Posterior cingulate gyrus (tissue), 11 donors: ENCODE measurements at regions of chr15 and their contacts with region 1.

Region 1: DNA sequence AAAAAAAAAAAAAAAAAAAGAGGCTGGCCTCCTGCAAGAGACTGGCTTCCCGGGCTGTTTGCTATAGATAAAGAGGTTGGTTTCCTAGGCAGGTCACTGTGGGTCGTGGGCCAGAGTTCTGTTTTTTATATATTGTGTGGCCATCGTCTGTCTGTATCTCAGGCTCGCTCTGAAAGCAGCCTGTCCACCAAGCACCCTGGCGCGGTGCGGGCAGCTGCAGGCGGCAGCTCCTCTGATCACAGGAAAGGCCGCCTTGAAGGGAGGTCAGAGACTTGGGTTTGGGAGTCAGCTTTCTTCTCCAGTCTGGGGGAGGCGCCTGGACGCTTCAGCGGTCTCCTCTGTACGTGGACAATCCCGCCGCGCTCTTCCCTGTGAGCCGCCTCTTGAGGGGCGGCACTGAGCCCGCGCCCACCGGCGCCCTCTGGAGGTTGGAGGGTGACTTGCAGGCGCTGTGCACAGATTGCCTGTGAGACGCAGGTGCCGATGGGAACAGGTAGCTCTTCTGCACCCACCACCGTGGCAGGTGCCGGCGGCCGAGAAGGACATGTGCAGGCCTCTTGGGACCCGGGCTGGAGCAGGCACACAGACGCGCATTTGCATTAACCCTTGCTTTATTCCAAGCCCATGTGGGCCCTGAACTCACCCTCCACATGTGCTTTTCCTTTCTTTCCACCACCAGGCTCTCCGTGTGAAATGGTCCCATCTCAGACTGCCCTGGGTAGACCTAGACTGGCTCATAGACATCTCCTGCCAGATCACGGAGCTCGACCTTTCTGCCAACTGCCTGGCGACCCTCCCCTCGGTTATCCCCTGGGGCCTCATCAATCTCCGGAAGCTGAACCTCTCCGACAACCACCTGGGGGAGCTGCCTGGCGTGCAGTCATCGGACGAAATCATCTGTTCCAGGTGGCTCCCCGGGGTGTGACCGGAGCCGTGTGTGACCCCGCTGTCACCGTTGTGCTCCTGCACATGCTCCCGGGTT is 89.3 kb downstream of the LRRK1 start:
- DNase-seq: peak; percentile 50 to 96 (median 70)

Region 2: GRCh38 chr15:100341662-100342560 is 666.5 kb before region 1 on chr15 and contains the start of gene ADAMTS17:
- intact Hi-C with region 1: loop called (anchors 5 kb)
- DNase-seq: peak; percentile 91 to 99 (median 95)

Region 3: GRCh38 chr15:100627789-100628395 is 380.6 kb before region 1 on chr15:
- intact Hi-C with region 1: loop called (anchors 1 kb)
- DNase-seq: peak in 8 of 10 donors; percentile 24 to 82 (median 70)

Region 4: GRCh38 chr15:100671858-100672543 is 336.4 kb before region 1 on chr15:
- intact Hi-C with region 1: loop called (anchors 2 kb)
- DNase-seq: peak in 1 of 10 donors; percentile 73

Region 5: DNA sequence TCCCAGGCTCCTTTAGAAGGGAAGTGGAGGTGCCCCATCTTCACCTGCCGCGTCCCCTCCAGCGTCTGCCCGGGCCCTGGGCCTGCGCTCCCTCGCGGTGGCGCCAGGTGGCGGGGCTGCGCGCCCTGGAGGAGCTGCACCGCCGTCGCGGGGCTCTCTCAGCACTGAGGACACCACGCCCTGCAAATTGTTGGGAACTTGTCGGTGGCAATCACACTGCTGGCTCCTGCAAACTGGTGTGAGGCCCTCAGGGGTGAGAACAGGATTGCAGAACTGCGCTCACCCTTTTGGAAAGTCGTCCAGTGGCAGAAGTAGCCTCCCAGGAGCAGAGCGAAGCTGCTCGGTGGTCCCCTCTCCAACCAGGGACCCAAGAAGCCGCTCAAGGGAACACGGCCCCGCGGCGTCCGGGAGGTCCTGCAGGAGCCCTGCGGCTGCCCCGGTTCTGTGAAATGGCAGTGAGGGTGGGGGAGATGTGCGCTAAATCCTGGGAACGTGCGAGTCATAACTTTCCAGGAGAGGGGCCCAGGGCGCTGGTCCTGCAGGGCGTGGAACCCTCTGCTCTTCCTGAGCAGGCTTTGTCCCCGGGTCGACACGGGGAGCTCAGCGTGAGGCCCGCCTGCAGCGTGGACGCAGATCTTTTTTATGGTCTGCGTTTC is 90.3 kb before region 1 on chr15:
- intact Hi-C with region 1: loop called (anchors 1 kb)
- DNase-seq: peak; percentile 43 to 96 (median 60)

Region 6: GRCh38 chr15:101045236-101045646 is 36.8 kb after region 1 on chr15:
- intact Hi-C with region 1: no loop called
- DNase-seq: peak in 3 of 10 donors; percentile 8 to 29 (median 28)

Region 7: DNA sequence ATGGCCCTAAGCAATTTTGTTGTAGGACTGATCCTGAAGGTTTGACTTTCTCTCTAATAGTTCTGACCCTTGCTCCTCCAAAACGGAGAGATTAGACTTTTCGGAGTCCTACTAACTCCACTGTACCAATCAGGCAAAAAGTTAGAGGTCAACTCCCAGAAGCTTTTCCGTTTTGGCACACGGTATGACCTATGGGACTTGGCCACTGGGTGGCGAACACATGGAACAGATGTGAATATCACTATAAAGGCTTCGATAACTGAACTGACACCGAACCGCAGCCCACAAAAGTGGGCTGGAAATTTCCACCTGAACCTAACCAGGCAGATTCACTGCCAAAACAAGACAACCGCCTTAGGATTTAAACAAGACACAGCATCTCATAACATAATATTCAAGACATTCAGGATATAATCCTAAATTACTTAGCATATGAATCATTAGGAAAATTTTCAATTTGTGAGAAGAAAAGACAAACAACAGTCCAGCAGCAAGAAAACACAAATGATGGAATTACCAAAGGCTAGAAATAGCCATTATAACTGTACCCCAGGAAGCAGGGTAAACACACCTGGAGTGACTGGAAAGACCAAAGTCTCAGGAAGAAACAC is 656.0 kb after region 1 on chr15:
- intact Hi-C with region 1: no loop called
- DNase-seq: peak in 1 of 10 donors; percentile 58